ENCODE measurements at regions of chr6 and their contacts with region 1.

Region 1: DNA sequence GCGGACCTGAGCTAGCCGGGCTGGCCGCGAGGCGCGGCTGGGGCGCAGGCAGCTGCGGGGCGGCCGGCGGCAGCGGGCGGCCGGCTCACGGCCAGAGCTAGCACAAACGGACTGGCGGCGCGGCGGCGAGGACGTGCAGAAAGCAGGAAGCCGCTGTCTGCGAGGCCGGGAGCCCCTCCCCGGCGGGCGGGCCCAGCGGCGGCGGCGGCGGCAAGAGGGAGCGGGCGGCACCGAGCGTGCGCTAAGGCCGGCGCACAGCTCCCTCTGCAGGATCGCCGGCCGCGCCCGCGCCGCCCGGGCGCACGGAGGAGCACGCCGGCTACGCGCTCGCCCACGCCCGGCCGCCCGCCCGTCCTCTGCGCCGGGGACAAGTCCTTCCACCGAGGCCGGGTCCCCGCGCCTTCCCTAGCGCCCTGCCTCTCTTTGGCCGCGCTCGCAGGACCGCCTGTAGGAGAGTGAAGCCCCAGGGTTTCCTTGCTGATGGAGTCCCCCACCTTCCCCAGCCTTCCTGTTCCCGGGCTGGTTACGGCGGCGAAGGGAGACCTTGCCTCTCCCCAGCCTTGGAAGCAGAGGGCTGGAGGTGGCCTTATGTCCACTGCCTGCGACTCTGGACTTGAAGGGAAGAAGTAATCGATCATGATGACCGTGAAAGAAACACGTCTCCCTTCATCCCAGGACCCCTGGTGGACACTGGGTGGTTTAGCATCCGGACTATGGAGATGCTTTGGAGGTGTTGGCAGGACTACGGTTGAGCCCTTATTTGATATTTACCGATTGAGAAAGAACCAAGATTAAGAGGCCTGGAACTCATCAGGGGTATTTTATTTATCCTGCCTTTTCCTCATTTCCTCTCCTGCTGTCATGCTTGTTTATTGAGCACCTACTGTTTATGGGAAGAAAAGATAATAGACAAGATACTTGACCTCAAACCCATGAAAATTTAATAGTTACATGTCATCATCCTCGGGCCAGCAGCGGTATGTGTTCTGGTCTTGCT is at the start of gene PREP:
- DNase-seq: peak; percentile 85
- ATAC-seq: peak; percentile 95
- H3K4me3 Mint-ChIP-seq: peak within 1 kb of the TSS; percentile 93
- H3K27ac Mint-ChIP-seq: peak within 1 kb of the TSS; percentile 74
- H3K4me1 Mint-ChIP-seq: peaks cover 37% of the 10 kb centered on the region
- H3K27me3 Mint-ChIP-seq: peaks cover 13% of the 10 kb centered on the region
- CTCF ChIP-seq: peak; percentile 48
- total RNA-seq, gene PREP: 31.1 and 31.3 TPM in 2 replicates

Region 2: DNA sequence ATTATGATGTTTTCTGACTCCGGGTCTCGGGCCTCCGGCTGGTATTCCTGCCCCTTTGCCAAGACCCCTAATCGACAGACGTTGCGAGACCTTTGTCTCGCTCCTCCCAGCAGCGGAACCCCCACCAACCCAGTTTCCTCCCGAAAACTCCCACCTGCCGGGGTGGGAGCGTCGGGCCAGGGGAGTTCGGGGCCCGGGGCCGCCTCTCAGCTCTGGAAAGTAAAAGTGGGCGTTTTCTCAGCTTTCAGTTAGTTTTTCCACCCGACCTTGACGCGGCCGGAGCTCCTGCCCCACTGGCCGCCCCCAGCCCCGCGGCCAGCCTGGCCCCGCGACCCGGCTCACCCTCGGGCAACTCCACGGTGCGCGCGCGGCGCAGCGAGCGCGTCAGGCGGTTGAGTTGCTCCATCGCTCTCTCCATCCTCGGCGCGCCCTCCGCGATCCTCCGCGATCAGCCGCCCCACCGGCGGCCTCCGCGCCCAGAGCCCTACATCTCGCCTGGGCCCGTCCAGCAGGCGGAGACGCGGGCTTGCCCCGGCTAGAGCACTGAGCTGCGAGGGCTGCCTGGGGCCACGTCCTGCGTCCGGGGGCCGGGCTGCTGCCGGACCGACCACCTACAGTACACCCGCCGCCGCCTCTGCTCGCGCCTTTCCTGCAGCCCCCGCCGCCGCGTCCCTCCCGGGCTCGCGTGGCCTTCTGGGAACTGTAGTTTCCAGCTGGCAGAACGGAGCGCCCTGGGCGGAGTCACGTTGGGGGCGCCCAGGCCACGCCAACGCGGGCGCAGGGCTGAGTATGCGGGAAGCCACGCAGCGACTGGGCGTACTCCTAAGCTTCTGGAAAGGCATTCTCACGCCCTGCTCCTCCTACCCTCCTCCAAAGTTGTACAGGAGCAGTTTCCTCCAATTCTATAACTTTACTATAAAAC is 543.8 kb before region 1 on chr6 and contains the start of gene HACE1:
- CTCF ChIA-PET with region 1: no interaction called
- POLR2A ChIA-PET with region 1: no interaction called
- intact Hi-C with region 1: loop called (anchors 5 kb)
- DNase-seq: peak; percentile 86
- ATAC-seq: peak; percentile 98
- H3K4me3 Mint-ChIP-seq: peak within 1 kb of the TSS; percentile 95
- H3K27ac Mint-ChIP-seq: peak within 1 kb of the TSS; percentile 80
- H3K4me1 Mint-ChIP-seq: peaks cover 10% of the 10 kb centered on the region
- H3K27me3 Mint-ChIP-seq: peaks cover 9% of the 10 kb centered on the region
- CTCF ChIP-seq: no peak
- total RNA-seq, gene HACE1: 7.1 and 7.8 TPM in 2 replicates

Region 3: GRCh38 chr6:105087571-105088211 is 315.5 kb before region 1 on chr6:
- CTCF ChIA-PET with region 1: interaction called, 13 read pairs
- POLR2A ChIA-PET with region 1: no interaction called
- intact Hi-C with region 1: loop called (anchors 1 kb)
- DNase-seq: no peak
- ATAC-seq: no peak
- H3K4me3 Mint-ChIP-seq: no peak overlapping the region
- H3K27ac Mint-ChIP-seq: no peak overlapping the region
- H3K4me1 Mint-ChIP-seq: no peaks in the 10 kb centered on the region
- H3K27me3 Mint-ChIP-seq: no peaks in the 10 kb centered on the region
- CTCF ChIP-seq: no peak

Region 4: DNA sequence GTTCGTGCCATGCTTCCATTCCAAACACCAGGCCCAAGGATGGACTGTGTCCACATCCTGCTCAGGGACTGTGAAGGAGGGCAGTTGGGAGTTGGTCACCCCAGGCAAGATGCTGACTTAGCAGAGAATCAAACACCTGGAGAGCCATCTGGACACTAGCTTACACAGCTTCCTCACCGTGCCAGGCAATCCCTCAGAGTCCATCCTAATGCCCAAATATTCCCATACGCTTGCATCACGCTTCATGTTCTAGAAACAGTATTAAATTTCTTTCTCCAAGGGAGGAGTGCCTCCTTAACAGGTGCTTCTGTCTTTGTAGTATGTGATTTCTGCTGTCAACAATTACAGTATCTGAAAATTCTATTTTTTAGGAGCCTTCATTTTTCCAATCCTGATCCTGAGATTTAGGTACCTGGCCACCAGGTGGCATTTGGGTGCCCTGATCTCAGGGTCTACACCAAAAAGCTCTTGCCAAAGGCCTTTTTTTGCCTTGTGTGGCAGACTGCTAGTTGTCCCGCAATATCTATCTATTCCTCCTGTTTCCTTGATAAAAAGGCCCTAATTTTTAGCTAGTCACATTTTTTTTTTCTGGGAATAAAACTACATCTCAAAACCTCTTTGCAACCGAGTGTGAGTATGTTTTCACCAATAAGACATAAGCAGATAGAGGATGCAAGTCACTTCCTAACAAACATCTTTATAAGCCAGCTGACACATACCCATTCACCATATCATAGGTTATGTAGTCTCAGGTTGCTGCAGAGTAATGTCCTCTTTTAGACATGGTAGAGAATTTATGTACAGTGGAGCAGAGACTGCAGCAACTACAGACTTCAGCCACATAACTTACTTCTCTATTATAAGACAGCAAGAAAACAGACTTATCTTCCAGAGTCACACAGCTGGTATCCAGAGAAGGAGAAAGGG is 85.4 kb before region 1 on chr6:
- CTCF ChIA-PET with region 1: no interaction called
- POLR2A ChIA-PET with region 1: no interaction called
- intact Hi-C with region 1: loop called (anchors 2 kb)
- DNase-seq: no peak
- ATAC-seq: no peak
- H3K4me3 Mint-ChIP-seq: no peak overlapping the region
- H3K27ac Mint-ChIP-seq: no peak overlapping the region
- H3K4me1 Mint-ChIP-seq: no peaks in the 10 kb centered on the region
- H3K27me3 Mint-ChIP-seq: no peaks in the 10 kb centered on the region
- CTCF ChIP-seq: no peak

Region 5: GRCh38 chr6:105431226-105431625 is 28.0 kb after region 1 on chr6:
- CTCF ChIA-PET with region 1: no interaction called
- POLR2A ChIA-PET with region 1: no interaction called
- intact Hi-C with region 1: no loop called
- DNase-seq: no peak
- ATAC-seq: no peak
- H3K4me3 Mint-ChIP-seq: no peak overlapping the region
- H3K27ac Mint-ChIP-seq: no peak overlapping the region
- H3K4me1 Mint-ChIP-seq: no peaks in the 10 kb centered on the region
- H3K27me3 Mint-ChIP-seq: peaks cover 8% of the 10 kb centered on the region
- CTCF ChIP-seq: no peak

Region 6: GRCh38 chr6:107033126-107033525 is 1629.9 kb after region 1 on chr6:
- CTCF ChIA-PET with region 1: no interaction called
- POLR2A ChIA-PET with region 1: no interaction called
- intact Hi-C with region 1: loop called (anchors 1 kb)
- DNase-seq: no peak
- ATAC-seq: no peak
- H3K4me3 Mint-ChIP-seq: no peak overlapping the region
- H3K27ac Mint-ChIP-seq: no peak overlapping the region
- H3K4me1 Mint-ChIP-seq: peaks cover 21% of the 10 kb centered on the region
- H3K27me3 Mint-ChIP-seq: no peaks in the 10 kb centered on the region
- CTCF ChIP-seq: no peak

Measured in activated B cell treated with CpG ODN at 0.5 μM for 24 hours (primary cell).